ENCODE measurements at regions of chr3 and their contacts with region 1.

Region 1: GRCh38 chr3:189262746-189263145 is 91.0 kb downstream of the TPRG1 start:
- DNase-seq: no peak
- ATAC-seq: no peak

Region 2: DNA sequence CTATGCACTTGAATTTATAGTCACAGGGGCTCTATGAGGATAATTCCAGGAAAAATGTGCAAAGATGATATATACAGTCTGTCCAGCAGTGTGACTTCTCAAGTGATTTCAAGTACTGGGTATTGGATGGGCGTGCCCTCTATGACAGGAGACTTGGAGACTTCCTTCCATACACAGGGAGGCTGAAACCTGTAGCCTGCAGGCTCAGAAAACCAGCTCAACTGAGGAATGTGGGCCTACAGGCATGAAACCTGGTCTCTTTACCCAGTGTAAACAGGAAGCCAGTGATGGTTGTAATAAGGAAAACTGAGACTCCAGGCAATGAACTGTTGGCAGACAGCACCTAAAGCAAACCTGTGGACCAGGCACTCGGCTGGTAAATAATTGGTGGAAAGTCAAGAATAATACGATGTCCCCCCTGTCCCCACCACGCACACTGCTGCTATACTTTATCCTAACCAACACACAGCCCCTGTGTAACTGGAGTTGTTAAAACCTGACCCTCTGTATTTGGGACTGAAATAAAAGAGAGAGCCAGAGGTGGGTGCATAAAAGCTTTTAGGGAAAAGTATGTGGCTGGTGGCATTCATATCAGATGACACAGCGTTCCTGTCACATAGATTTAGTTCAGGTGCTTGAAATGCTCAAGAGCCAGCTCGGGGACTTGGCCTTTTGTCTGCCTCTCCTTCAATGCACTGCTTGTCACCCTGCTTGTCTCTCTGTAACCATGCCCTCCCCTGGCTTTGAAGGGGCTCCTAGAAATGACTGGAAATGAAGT is 53.7 kb after region 1 on chr3:
- intact Hi-C with region 1: loop called (anchors 2 kb)
- DNase-seq: no peak
- ATAC-seq: no peak

Region 3: DNA sequence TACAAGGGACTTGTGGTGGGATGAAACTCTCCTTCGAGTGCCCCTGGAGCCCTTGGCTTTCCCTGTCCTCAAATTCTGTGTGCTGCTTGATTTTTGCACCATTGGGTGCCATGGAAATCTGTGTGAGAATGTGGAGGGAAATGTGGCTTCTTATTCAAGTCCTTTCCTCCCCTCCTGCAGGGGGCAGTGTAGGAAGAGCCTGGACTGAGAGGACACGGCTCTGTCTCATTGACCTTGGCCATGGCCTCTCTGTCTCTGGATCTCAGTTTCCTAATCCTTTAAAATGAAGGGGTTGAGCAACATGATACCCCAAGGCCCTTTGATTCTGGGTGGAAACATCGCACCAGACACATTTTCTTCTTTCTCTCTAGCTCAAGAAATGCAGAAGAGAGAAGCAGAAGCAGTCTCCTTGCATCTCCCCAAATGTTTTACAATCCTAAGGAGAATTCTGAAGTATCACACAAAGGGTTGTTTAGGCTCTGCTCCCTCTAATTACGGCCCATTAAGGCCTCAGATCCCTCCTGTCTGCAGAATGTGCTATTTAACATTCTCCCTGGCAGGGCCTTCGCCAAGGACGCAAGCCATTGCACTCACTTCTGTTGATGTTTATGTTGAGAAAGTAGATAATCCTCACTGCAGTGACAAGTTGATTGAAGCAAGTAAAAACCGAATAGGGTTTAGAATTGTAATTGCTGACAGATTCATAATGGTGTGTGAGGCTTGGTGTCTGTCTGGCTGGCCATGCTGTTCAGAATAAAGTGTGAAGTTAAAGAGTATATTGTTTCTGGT is 78.1 kb after region 1 on chr3:
- intact Hi-C with region 1: no loop called
- DNase-seq: no peak
- ATAC-seq: no peak

Measured in sciatic nerve (tissue), 2 donors.